ENCODE measurements at regions of chr6 and their contacts with region 1.

Region 1: GRCh38 chr6:31702819-31703522 is at the start of gene ABHD16A:
- DNase-seq: peak; percentile 93 to 99 (median 96)
- ATAC-seq: peak; percentile 93 to 94
- H3K4me3 Mint-ChIP-seq: peak within 1 kb of the TSS; percentile 95 to 100 (median 98)
- H3K27ac Mint-ChIP-seq: peak within 1 kb of the TSS; percentile 91 to 99 (median 96)
- H3K4me1 Mint-ChIP-seq: peaks cover 17 to 43% (median 33%) of the 10 kb centered on the region in 4 donors
- H3K27me3 Mint-ChIP-seq: no peaks in the 10 kb centered on the region
- polyA plus RNA-seq, gene ABHD16A: 26.9 to 35.5 (median 34.1) TPM

Region 2: GRCh38 chr6:31665501-31666336 is 37.3 kb before region 1 on chr6 and contains the start of gene CSNK2B:
- POLR2A ChIA-PET with region 1: interaction called, 18 read pairs
- DNase-seq: peak; percentile 94 to 98 (median 98)
- ATAC-seq: peak; percentile 85 to 86
- H3K4me3 Mint-ChIP-seq: peak within 1 kb of the TSS; percentile 93 to 100 (median 97)
- H3K27ac Mint-ChIP-seq: peak within 1 kb of the TSS; percentile 96 to 99 (median 98)
- H3K4me1 Mint-ChIP-seq: peaks cover 21 to 73% (median 67%) of the 10 kb centered on the region in 4 donors
- H3K27me3 Mint-ChIP-seq: no peaks in the 10 kb centered on the region
- polyA plus RNA-seq, gene CSNK2B: 214 to 230 (median 217) TPM